Colonic mucosa (tissue), 4 donors: ENCODE measurements at regions of chr12 and their contacts with region 1.

Region 1: GRCh38 chr12:85448548-85449139 is 168.6 kb downstream of the ALX1 start:
- DNase-seq: no peak
- H3K4me3 ChIP-seq: no peak overlapping the region
- H3K27ac ChIP-seq: no peak overlapping the region
- H3K4me1 ChIP-seq: no peaks in the 10 kb centered on the region
- H3K27me3 ChIP-seq: no peaks in the 10 kb centered on the region
- CTCF ChIP-seq: peak; percentile 45

Region 2: DNA sequence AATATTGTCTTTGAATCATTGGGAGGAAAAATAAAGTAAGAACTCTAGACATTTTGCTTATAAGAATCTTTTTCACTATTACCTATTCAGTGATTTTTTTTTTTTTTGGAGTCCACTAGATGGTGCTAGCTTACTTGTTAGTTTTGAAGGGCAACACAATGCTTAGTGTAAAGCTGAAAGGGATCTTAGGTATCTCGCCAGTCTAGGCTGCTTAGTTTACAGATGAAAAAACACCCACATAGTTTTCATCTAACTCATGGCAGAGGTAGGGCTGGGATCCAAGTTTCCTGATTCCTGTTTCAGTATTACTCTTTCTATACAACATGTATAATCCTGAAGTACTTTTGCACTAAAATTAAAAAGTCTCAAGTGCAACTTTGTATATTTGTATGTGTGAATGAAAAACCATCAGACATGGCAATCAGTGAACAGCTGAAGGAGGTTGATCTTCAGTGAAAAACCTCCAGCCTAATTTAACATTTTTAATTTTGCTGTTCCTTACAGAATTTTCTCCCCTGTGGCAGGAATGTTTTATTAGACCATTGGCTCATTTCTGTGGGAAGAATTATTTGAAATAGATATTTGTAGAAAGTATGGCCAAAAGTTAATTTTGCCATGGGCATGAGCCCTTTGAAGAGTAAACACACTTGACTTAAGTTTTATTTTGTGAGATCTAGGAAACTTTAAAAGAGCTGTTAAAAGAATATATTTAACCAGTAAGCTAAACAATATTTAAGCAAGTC is 371.8 kb before region 1 on chr12:
- intact Hi-C with region 1: loop called (anchors 10 kb)
- DNase-seq: no peak
- H3K4me3 ChIP-seq: no peak overlapping the region
- H3K27ac ChIP-seq: no peak overlapping the region
- H3K4me1 ChIP-seq: no peaks in the 10 kb centered on the region
- H3K27me3 ChIP-seq: no peaks in the 10 kb centered on the region
- CTCF ChIP-seq: no peak

Region 3: DNA sequence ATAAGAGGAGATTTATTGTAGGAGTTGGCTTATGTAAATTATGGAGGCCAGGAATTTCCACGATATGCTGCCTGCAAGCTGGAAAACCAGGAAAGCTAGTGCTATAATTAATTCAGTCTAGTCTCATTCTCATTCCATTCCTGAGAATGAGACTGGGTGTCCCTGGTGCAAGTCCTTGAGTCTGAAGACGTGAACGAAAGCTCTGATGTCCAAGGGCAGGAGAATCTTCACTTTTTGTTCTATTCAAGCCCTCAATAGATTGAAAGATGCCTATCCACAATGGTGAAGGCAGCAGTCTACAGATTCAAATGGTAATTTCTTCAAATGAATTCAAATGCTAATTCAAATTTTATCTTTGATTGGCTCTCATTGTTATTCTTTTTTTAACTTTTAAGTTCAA is 1658.6 kb after region 1 on chr12:
- intact Hi-C with region 1: no loop called
- DNase-seq: no peak
- H3K4me3 ChIP-seq: no peak overlapping the region
- H3K27ac ChIP-seq: no peak overlapping the region
- H3K4me1 ChIP-seq: no peaks in the 10 kb centered on the region
- H3K27me3 ChIP-seq: no peaks in the 10 kb centered on the region
- CTCF ChIP-seq: no peak